ENCODE measurements at regions of chr15 and their contacts with region 1.

Region 1: GRCh38 chr15:31488426-31489204 is 162.0 kb downstream of the KLF13 start:
- DNase-seq: peak; percentile 63
- ATAC-seq: peak; percentile 52
- H3K4me3 Mint-ChIP-seq: peak overlapping the region; percentile 15
- H3K27ac Mint-ChIP-seq: peak overlapping the region; percentile 72
- H3K4me1 Mint-ChIP-seq: peaks cover 70% of the 10 kb centered on the region
- H3K27me3 Mint-ChIP-seq: no peaks in the 10 kb centered on the region

Region 2: GRCh38 chr15:31200735-31201151 is 287.9 kb before region 1 on chr15:
- CTCF ChIA-PET with region 1: interaction called, 50 read pairs
- DNase-seq: peak; percentile 81
- ATAC-seq: peak; percentile 85
- H3K4me3 Mint-ChIP-seq: no peak overlapping the region
- H3K27ac Mint-ChIP-seq: no peak overlapping the region
- H3K4me1 Mint-ChIP-seq: peaks cover 5% of the 10 kb centered on the region
- H3K27me3 Mint-ChIP-seq: peaks cover 15% of the 10 kb centered on the region

Region 3: DNA sequence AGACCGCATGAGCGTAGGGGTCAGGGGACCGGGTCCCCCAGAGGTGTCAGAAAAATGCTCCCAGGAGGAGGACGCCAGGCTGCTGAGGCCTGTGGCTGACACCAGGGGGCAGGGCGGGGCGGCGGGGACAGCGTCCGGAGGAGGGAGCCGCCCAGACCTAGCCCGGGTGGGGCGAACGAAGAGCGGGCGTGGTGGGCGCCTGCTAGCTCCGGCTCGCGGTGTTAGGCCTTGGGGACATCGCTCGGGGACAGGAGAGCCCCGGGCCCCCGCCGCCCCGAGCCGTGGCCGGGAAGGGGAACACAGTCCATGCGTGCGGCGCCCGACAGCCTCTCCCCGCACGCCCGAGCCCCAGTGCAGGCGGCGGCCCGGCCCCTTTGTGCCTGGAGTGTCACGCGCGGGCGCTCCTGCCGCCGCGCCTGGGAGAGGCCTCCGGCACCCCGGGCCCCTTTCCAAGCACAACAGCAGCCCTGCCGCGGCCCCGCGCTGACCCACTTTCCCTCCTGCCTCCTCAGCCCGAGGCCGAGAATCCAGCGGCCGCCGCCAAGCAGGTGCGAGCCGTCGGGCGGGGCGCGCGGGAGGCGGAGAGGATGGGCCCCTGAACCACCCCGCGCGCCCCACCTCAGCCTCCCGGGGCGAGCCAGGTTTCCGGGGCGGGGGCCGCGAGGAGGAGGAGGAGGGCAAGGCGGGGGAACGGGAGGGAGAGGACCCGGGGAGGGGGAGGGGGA is 273.0 kb before region 1 on chr15:
- CTCF ChIA-PET with region 1: interaction called, 29 read pairs
- DNase-seq: peak; percentile 90
- ATAC-seq: peak; percentile 88
- H3K4me3 Mint-ChIP-seq: peak overlapping the region; percentile 69
- H3K27ac Mint-ChIP-seq: peak overlapping the region; percentile 81
- H3K4me1 Mint-ChIP-seq: peaks cover 29% of the 10 kb centered on the region
- H3K27me3 Mint-ChIP-seq: no peaks in the 10 kb centered on the region

Region 4: GRCh38 chr15:31344823-31345605 is 143.6 kb before region 1 on chr15:
- CTCF ChIA-PET with region 1: interaction called, 10 read pairs
- DNase-seq: peak; percentile 69
- ATAC-seq: peak; percentile 41
- H3K4me3 Mint-ChIP-seq: peak overlapping the region; percentile 95
- H3K27ac Mint-ChIP-seq: peak overlapping the region; percentile 97
- H3K4me1 Mint-ChIP-seq: peaks cover 95% of the 10 kb centered on the region
- H3K27me3 Mint-ChIP-seq: no peaks in the 10 kb centered on the region

Region 5: DNA sequence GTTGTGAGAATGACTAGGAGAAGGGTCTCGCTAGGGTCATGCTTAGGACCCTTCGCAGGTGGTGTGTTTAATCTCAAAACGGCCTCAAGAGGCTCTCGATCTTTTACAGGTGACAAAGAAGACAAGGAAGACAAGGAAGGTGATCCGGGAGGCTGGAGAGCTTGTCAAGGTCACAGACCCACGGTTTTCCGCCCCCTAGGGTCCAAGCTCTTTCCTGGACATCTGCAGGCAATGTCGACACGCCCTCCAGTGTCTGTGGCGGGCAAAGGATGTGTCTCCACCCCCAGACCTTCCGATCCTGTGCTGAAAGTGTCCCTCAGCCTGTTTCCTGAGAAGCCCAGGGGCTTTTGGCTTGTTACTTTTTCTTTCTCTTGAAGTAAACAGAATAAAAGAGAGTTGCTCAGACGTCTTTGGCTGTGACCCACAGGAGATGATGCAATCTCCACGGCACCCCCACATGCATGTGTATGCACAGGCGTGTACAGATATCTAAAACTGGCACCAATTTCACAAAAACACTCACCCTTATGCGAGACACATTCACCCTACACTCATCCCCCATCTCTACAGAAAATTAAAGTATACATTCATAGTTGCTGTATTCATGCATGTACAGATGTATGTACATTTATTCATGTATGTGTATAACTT is 53.2 kb before region 1 on chr15:
- CTCF ChIA-PET with region 1: interaction called, 272 read pairs
- DNase-seq: peak; percentile 95
- ATAC-seq: peak; percentile 72
- H3K4me3 Mint-ChIP-seq: peak overlapping the region; percentile 68
- H3K27ac Mint-ChIP-seq: peak overlapping the region; percentile 94
- H3K4me1 Mint-ChIP-seq: peaks cover 70% of the 10 kb centered on the region
- H3K27me3 Mint-ChIP-seq: no peaks in the 10 kb centered on the region

Region 6: DNA sequence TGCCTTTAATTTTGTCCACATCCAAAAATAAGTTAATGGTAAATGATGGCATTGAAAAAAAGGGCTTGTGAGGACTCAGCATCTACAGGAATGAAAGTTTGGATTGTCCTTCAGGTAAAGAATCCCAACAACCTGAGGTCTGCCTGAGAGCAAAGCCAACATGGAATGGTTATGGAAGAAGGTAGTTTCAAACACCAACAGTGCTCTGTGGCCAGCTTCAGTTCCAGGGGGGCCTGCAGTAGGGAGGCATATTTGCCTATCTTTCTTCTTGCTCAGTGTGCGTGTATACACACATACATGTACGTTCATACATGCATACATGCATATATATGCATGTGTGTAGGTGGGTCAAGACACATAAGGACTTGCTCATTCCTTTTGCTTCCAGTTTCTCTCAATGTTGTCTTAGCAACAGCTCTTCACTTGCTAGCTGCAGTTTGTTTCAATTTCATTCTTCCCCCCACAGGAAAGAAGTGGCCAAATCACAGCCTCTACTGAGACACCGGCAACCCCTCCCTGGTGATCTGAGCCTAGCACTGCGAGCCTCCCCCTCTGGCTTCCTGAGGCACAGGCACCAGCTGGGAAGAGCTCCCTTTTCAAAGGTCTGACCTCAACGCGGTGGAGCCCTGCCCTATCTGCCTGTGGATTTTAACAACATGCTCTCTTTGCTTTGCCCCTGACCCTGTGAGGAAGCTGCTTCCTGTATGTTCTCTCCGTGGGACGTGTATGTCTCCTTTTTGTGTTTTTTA is 15.8 kb before region 1 on chr15:
- CTCF ChIA-PET with region 1: interaction called, 65 read pairs
- DNase-seq: peak; percentile 80
- ATAC-seq: peak; percentile 94
- H3K4me3 Mint-ChIP-seq: peak overlapping the region; percentile 69
- H3K27ac Mint-ChIP-seq: peak overlapping the region; percentile 93
- H3K4me1 Mint-ChIP-seq: peaks cover 38% of the 10 kb centered on the region
- H3K27me3 Mint-ChIP-seq: no peaks in the 10 kb centered on the region

Region 7: GRCh38 chr15:31511707-31512310 is 23.2 kb after region 1 on chr15:
- CTCF ChIA-PET with region 1: no interaction called
- DNase-seq: peak; percentile 65
- ATAC-seq: no peak
- H3K4me3 Mint-ChIP-seq: no peak overlapping the region
- H3K27ac Mint-ChIP-seq: no peak overlapping the region
- H3K4me1 Mint-ChIP-seq: peaks cover 15% of the 10 kb centered on the region
- H3K27me3 Mint-ChIP-seq: peaks cover 4% of the 10 kb centered on the region

Measured in activated CD8-positive, alpha-beta memory T cell treated with anti-CD3 and anti-CD28 coated beads, Interleukin-2, amount 10 ng/mL, durations not matched to agents 7 days and 5 days (primary cell).